Adrenal gland (tissue), 19 donors: ENCODE measurements at regions of chrX and their contacts with region 1.

Region 1: GRCh38 chrX:119118780-119119395 is 8.7 kb downstream of the KIAA1210 start:
- DNase-seq: peak; percentile 24 to 71 (median 46)
- H3K4me3 ChIP-seq: no peak overlapping the region
- H3K27ac ChIP-seq: no peak overlapping the region
- H3K4me1 ChIP-seq: no peaks in the 10 kb centered on the region
- H3K27me3 ChIP-seq: peaks cover 6% of the 10 kb centered on the region
- CTCF ChIP-seq: peak; percentile 54 to 71 (median 67)
- POLR2A ChIP-seq: no peak

Region 2: DNA sequence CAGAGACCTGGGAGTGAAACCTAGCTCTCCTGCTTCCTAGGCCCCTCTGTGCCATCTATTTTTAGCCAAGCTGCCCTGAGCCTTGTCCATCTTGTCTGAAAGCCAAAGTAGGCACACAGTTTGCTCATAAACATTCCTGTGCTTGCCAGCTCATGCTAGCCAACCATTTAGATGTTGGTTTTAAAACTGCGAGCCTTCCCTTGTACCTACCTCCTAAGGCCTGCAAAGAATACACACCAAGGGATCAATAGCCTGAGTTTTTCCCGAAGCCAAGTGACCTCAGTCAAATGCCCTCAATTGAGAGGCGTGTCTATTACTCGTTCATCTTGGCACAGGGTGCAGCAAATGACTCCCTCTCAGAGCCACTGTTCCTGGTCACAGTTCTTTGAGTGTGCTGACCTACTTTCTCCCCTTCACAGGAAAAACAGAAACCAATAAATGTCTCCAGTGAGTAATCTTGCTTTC is 246.8 kb before region 1 on chrX:
- intact Hi-C with region 1: no loop called
- DNase-seq: peak; percentile 37 to 81 (median 68)
- H3K4me3 ChIP-seq: no peak overlapping the region
- H3K27ac ChIP-seq: peak overlapping the region in 4 of 5 donors; percentile 44 to 78 (median 67)
- H3K4me1 ChIP-seq: peaks cover 8 to 11% of the 10 kb centered on the region in 2 donors
- H3K27me3 ChIP-seq: no peaks in the 10 kb centered on the region
- CTCF ChIP-seq: no peak
- POLR2A ChIP-seq: peak in 1 of 2 donors; percentile 13

Region 3: DNA sequence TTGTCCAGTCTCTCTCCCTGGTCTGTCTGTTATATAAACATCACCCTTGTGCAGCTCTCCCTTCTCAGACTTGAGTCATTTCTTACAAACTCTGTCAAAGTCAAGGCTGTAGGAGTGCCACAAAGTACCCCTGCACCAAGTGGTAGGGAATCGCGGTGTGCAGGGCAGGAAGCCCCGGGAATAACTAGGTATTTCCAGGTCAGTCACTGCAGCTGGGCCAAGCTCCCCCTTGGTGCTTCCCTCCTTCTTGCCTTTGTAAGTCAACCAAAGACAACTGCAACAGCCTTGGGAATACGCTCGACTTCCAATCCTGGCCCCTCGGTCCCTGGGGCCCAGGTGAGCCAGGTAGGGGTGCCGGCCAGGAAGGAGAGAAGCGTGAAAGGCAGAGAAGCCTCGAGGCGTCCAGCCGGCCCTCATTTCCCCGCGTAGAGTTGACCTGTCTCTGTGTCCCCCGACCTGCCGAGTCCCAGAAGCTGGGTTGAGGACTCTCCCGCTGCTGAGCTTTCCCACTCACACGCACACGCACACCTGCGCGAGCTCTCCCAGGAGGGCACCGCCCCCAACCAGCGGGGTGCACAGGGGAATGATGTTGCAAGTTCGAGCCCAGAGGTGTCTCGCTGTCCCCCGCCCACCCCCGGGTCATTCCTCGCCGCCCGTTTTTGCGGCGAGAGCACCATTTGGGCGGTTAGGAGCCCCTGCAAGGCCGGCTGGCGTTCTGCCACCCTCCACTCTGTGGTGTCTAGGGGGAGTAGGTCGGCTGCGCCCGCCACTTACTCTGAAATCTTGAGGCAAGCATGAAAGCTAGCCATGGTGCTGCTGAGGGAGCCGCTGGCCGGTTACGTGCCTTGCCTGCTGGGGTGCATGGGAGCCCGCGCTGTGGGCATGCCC is 31.5 kb after region 1 on chrX:
- intact Hi-C with region 1: no loop called
- DNase-seq: peak in 2 of 7 donors; percentile 7 to 20
- H3K4me3 ChIP-seq: no peak overlapping the region
- H3K27ac ChIP-seq: no peak overlapping the region
- H3K4me1 ChIP-seq: no peaks in the 10 kb centered on the region
- H3K27me3 ChIP-seq: peaks cover 34% of the 10 kb centered on the region
- CTCF ChIP-seq: no peak
- POLR2A ChIP-seq: no peak

Region 4: GRCh38 chrX:119266364-119266995 is 147.6 kb after region 1 on chrX:
- intact Hi-C with region 1: loop called in 1 of 2 experiments (anchors 5 kb)
- DNase-seq: peak in 5 of 7 donors; percentile 12 to 52 (median 31)
- H3K4me3 ChIP-seq: no peak overlapping the region
- H3K27ac ChIP-seq: no peak overlapping the region
- H3K4me1 ChIP-seq: no peaks in the 10 kb centered on the region
- H3K27me3 ChIP-seq: peaks cover 30% of the 10 kb centered on the region
- CTCF ChIP-seq: peak; percentile 24 to 67 (median 50)
- POLR2A ChIP-seq: no peak

Region 5: GRCh38 chrX:119502727-119503483 is 384.0 kb after region 1 on chrX:
- intact Hi-C with region 1: no loop called
- DNase-seq: peak in 4 of 7 donors; percentile 6 to 35 (median 14)
- H3K4me3 ChIP-seq: no peak overlapping the region
- H3K27ac ChIP-seq: peak overlapping the region in 3 of 5 donors; percentile 35 to 86 (median 50)
- H3K4me1 ChIP-seq: no peaks in the 10 kb centered on the region
- H3K27me3 ChIP-seq: no peaks in the 10 kb centered on the region
- CTCF ChIP-seq: no peak
- POLR2A ChIP-seq: no peak